Natural killer cell (primary cell): ENCODE measurements at regions of chr10 and their contacts with region 1.

Region 1: DNA sequence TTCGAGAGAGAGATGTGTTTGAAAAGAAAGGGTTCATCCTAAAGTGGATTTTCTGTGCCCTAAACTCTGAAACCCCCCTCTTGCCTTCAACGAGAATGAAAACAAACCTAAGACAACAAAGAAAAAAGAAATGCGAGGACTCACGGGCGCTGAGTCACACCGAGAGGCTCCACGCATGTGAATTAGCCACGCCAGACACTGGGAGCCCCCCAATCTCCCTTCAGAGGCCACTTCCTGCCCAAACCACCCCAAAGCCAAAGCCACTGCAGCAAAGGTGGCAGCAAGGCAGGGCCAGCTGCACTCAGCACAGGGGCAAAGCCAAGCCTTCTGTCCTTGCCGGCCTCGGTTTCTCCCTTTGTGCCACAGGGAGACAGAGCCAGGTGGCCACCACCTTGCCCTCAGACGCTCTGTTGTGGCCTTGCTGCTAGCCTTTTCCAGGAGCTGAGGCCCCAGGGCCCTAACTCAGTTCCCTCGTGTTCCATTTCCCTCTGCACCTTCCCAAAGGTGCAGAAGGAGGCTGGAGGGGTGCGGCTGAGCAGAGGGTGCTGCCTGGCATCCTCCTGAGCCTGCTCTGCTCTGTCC is 93.3 kb downstream of the FAM53B start:
- DNase-seq: peak; percentile 81 to 87
- ATAC-seq: peak; percentile 57 to 77 (median 75)
- H3K4me3 ChIP-seq: no peak overlapping the region
- H3K4me3 Mint-ChIP-seq: peak overlapping the region; percentile 90
- H3K27ac ChIP-seq: peak overlapping the region; percentile 84
- H3K27ac Mint-ChIP-seq: peak overlapping the region; percentile 97 to 99
- H3K4me1 ChIP-seq: peaks cover 100% of the 10 kb centered on the region
- H3K4me1 Mint-ChIP-seq: peaks cover 56 to 90% of the 10 kb centered on the region in 2 donors
- H3K27me3 ChIP-seq: no peaks in the 10 kb centered on the region
- H3K27me3 Mint-ChIP-seq: no peaks in the 10 kb centered on the region
- CTCF ChIP-seq: no peak

Region 2: DNA sequence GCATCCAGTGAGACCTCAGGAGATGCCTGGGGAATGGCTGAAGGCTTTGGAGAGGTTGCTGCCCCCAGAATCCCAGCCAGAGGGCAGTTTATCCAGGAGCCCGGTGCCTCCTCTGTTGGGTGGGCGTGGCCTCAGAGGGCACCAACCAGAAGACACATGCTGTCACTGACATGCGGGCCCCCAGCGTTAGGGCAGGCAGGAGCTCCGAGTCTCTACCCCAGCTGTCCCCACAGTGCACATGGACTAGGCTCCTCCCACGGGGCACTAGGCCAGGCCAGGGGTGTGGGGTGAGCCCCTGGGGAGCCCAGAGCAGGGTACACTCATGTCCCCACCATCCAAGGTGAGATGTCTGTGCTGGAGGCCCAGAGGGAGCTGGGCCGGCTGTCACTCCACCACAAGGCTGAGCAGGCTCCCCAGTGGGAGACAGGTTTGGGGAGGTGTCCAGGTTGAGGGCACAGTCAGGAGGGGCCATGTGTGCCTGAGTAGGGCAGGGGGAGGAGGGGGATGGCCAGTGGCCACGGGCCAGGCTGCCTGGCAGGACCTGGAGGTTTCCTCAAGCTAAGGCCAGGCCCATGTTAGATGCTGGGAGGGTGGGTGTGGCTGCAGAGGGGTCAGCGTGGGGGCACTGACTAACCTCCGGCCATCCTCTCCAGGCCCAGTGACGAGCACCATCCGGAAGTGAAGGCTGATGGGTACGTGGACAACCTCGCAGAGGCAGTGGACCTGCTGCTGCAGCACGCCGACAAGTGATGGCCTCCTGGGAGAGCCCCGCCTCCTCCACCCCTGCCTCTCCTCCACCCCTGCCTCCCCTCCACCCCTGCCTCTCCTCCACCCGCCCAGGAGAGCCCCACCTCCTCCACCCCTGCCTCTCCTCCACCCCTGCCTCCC is 38.1 kb before region 1 on chr10:
- intact Hi-C with region 1: loop called (anchors 2 kb)
- DNase-seq: peak in 1 of 2 donors; percentile 65
- ATAC-seq: peak in 2 of 3 donors; percentile 18 to 31
- H3K4me3 ChIP-seq: no peak overlapping the region
- H3K4me3 Mint-ChIP-seq: no peak overlapping the region
- H3K27ac ChIP-seq: peak overlapping the region; percentile 78
- H3K27ac Mint-ChIP-seq: peak overlapping the region; percentile 87 to 91
- H3K4me1 ChIP-seq: peaks cover 79% of the 10 kb centered on the region
- H3K4me1 Mint-ChIP-seq: peaks cover 29 to 63% of the 10 kb centered on the region in 2 donors
- H3K27me3 ChIP-seq: no peaks in the 10 kb centered on the region
- H3K27me3 Mint-ChIP-seq: no peaks in the 10 kb centered on the region
- CTCF ChIP-seq: no peak

Region 3: GRCh38 chr10:124636271-124636995 is 14.5 kb before region 1 on chr10:
- intact Hi-C with region 1: loop called (anchors 1 kb)
- DNase-seq: peak in 1 of 2 donors; percentile 74
- ATAC-seq: peak in 2 of 3 donors; percentile 14 to 16
- H3K4me3 ChIP-seq: no peak overlapping the region
- H3K4me3 Mint-ChIP-seq: peak overlapping the region; percentile 40
- H3K27ac ChIP-seq: peak overlapping the region; percentile 22
- H3K27ac Mint-ChIP-seq: peak overlapping the region; percentile 45 to 99
- H3K4me1 ChIP-seq: peaks cover 76% of the 10 kb centered on the region
- H3K4me1 Mint-ChIP-seq: peaks cover 44 to 79% of the 10 kb centered on the region in 2 donors
- H3K27me3 ChIP-seq: no peaks in the 10 kb centered on the region
- H3K27me3 Mint-ChIP-seq: no peaks in the 10 kb centered on the region
- CTCF ChIP-seq: peak; percentile 24